Naive thymus-derived CD4-positive, alpha-beta T cell (primary cell): ENCODE measurements at regions of chr10 and their contacts with region 1.

Region 1: DNA sequence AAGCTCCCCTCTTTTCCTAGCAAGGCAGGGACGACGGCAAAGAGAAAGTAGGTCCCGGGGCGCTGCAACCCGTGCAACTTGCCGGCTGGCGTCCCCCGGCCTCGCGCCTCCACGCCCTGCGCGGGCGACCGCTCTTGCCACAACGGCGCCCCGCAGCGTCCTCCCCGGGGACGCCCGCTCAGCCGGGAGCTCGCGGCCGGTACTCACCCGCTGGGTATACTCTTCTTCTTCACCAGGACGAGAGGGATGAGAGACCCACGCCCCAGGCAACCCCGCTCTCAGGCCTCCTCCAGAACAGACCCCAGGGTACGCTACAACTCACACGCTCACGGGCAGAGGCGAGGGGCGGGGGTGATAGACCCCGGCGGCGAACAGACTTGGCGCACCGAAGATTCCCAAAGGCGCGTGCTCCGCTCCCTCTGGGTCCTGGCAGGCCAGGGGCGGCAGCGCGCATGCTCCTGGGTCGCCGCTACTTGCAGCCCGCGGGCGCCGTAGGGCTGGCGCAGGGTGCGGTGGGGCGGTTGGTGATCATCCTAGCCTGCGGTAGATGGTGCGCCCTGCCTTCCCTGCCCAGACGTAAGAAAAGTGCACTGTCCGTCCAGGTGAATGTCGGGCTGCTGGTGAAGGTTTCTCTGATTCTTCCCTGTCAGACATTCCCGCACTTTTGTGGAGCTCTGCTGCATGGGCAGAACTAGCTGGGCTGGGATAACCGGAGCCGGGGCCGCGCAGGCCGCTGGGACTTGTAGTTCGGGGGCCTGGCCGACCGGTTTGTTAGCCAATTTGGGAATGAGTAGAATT is at the start of gene CC2D2B:
- DNase-seq: peak; percentile 26 to 78 (median 53)
- ATAC-seq: peak; percentile 84
- H3K4me3 ChIP-seq: peak within 1 kb of the TSS; percentile 62
- H3K4me3 Mint-ChIP-seq: peak within 1 kb of the TSS; percentile 92 to 95 (median 94)
- H3K27ac ChIP-seq: peak within 1 kb of the TSS; percentile 65
- H3K27ac Mint-ChIP-seq: peak within 1 kb of the TSS; percentile 29 to 92 (median 89)
- H3K4me1 ChIP-seq: no peaks in the 10 kb centered on the region
- H3K4me1 Mint-ChIP-seq: peaks cover 11 to 20% (median 18%) of the 10 kb centered on the region in 7 donors
- H3K27me3 ChIP-seq: no peaks in the 10 kb centered on the region
- H3K27me3 Mint-ChIP-seq: peaks cover 0 to 20% (median 0%) of the 10 kb centered on the region in 5 donors
- total RNA-seq, gene CC2D2B: 0.64 to 0.99 TPM in 2 of 5 experiments, not detected in the others

Region 2: DNA sequence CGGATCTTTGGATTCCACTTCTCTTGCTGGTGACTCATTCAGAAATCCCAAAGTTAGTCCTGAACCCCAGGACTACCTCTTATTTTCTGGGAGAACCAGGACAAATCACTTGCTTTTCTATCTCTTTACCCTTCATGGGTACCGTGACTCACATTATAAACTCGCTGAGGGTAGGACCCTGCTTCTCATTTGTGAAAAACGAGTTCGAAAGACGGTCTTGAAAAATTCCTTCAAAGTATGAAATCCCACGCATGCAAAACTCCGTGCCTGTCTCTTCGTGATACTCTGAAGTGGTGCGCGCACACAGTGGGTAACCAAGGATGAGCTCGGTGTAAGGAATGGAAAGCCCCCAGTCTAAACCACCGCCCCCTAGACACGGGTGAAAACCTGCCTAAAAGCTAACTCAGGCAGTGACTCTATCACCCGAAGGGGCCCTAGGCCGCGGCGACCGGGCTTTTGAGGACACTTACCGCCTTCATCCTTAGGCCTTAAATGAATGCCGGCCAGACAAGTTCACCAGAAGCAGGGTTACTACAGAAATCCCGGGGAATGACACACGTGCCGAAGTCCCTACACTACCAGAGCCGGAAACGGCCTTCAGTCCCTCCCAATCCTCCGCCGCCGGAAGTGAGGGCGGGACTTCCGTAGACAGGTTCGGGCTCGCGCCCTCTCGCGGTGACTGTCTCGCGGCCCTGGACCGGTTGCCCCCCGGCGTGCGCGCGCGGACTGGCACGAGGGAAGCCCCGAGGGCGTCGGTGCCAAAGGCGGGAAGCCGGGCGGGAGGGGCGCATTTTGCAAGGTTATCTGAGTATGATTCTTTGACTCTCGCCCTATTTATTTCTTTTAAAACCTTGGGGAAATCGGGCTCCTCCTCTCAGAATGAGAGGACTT is 1545.0 kb before region 1 on chr10 and contains the start of gene NOC3L:
- CTCF ChIA-PET with region 1: no interaction called
- POLR2A ChIA-PET with region 1: no interaction called
- intact Hi-C with region 1: loop called in 1 of 2 experiments (anchors 2 kb)
- DNase-seq: peak; percentile 85 to 96 (median 91)
- ATAC-seq: peak; percentile 97
- H3K4me3 ChIP-seq: peak within 1 kb of the TSS; percentile 76
- H3K4me3 Mint-ChIP-seq: peak within 1 kb of the TSS; percentile 93 to 98 (median 96)
- H3K27ac ChIP-seq: peak within 1 kb of the TSS; percentile 92
- H3K27ac Mint-ChIP-seq: peak within 1 kb of the TSS; percentile 90 to 99 (median 97)
- H3K4me1 ChIP-seq: peaks cover 13 to 18% of the 10 kb centered on the region in 2 donors
- H3K4me1 Mint-ChIP-seq: peaks cover 20 to 54% (median 42%) of the 10 kb centered on the region in 7 donors
- H3K27me3 ChIP-seq: no peaks in the 10 kb centered on the region
- H3K27me3 Mint-ChIP-seq: peaks cover 0 to 14% (median 9%) of the 10 kb centered on the region in 5 donors
- total RNA-seq, gene NOC3L: 8.6 to 28.8 (median 24.8) TPM

Region 3: DNA sequence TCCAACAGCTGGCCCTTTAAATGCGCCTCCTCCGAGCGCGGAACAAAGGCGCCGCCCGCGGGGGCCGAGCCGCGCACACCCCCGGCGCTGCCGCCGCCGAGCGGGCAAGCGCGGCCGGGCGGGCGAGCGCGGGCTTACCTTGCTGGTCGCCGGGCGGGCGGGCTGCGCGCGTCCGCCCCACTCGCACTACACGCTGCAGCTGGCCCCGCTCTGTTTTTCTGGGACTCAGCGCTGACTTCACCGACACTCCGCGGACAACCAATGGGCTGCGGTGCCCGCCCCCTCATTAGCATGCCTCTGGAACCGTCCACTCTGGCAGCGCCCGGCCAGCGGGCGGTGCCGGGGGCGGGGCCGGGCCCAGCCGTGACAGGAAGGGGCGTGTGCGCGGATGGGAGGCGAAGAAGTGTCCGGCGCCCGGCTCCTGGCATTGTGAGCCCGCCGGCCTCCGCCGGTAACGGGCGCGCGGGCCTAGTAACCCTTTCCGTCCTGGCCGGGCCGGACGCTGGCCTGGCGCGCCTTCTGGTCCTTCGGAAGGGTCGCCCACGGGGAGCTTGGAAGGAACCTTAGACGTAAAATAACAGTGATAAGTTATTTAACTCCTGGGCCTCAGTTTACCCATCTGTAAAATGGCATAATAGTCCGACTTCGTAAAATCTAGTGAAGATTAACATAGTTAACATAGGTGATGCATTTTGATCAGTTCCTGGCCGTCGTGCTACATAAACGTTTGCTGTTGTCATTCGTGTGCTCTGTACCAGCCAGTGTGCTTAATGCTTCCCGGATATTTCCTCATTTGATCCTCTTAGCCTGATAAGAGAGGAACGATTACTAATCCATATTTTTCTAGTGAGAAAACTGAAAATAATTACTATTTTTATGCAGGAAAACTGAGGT is 346.2 kb before region 1 on chr10 and contains the start of gene SORBS1:
- CTCF ChIA-PET with region 1: no interaction called
- POLR2A ChIA-PET with region 1: no interaction called
- intact Hi-C with region 1: loop called in 1 of 2 experiments (anchors 5 kb)
- DNase-seq: peak; percentile 80 to 88 (median 82)
- ATAC-seq: peak; percentile 99
- H3K4me3 ChIP-seq: peak within 1 kb of the TSS; percentile 90
- H3K4me3 Mint-ChIP-seq: peak within 1 kb of the TSS; percentile 96 to 100 (median 99)
- H3K27ac ChIP-seq: peak within 1 kb of the TSS; percentile 66
- H3K27ac Mint-ChIP-seq: peak within 1 kb of the TSS; percentile 76 to 97 (median 89)
- H3K4me1 ChIP-seq: peaks cover 4% of the 10 kb centered on the region in 2 donors
- H3K4me1 Mint-ChIP-seq: peaks cover 7 to 16% (median 11%) of the 10 kb centered on the region in 7 donors
- H3K27me3 ChIP-seq: no peaks in the 10 kb centered on the region
- H3K27me3 Mint-ChIP-seq: peaks cover 0 to 63% (median 5%) of the 10 kb centered on the region in 5 donors
- total RNA-seq, gene SORBS1: 0.58 to 1.9 (median 1.4) TPM

Region 4: GRCh38 chr10:95656291-95657164 is 251.1 kb before region 1 on chr10 and contains the start of gene ALDH18A1:
- CTCF ChIA-PET with region 1: no interaction called
- POLR2A ChIA-PET with region 1: no interaction called
- intact Hi-C with region 1: no loop called
- DNase-seq: peak; percentile 78 to 95 (median 88)
- ATAC-seq: peak; percentile 95
- H3K4me3 ChIP-seq: peak within 1 kb of the TSS; percentile 78
- H3K4me3 Mint-ChIP-seq: peak within 1 kb of the TSS; percentile 98 to 100 (median 99)
- H3K27ac ChIP-seq: peak within 1 kb of the TSS; percentile 72
- H3K27ac Mint-ChIP-seq: peak within 1 kb of the TSS; percentile 82 to 97 (median 93)
- H3K4me1 ChIP-seq: peaks cover 7 to 13% of the 10 kb centered on the region in 2 donors
- H3K4me1 Mint-ChIP-seq: peaks cover 7 to 40% (median 27%) of the 10 kb centered on the region in 7 donors
- H3K27me3 ChIP-seq: no peaks in the 10 kb centered on the region
- H3K27me3 Mint-ChIP-seq: peaks cover 0 to 3% (median 0%) of the 10 kb centered on the region in 5 donors
- total RNA-seq, gene ALDH18A1: 15.0 to 73.8 (median 26.0) TPM

Region 5: DNA sequence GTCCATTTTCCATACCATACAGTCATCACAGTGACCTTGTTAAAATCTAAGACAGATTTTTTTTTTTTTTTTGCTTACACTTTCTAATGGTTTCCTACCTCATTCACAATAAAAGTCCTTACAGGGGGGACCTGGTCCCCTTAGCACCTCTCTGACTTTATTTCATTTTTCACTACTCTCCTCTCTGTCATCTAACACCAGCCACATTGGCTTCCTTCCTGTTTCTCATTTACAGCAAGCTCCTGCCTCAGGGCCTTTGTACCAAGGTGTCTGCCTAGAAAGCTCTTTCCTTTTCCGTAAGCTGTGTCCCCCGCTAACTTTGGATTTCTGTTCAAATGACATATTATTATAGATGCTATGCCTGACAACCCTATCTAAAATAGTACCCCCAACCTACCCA is 27.8 kb after region 1 on chr10:
- CTCF ChIA-PET with region 1: no interaction called
- POLR2A ChIA-PET with region 1: no interaction called
- intact Hi-C with region 1: no loop called
- DNase-seq: no peak
- ATAC-seq: no peak
- H3K4me3 ChIP-seq: no peak overlapping the region
- H3K4me3 Mint-ChIP-seq: peak overlapping the region in 2 of 10 donors; percentile 38
- H3K27ac ChIP-seq: no peak overlapping the region
- H3K27ac Mint-ChIP-seq: peak overlapping the region in 1 of 9 donors; percentile 53
- H3K4me1 ChIP-seq: no peaks in the 10 kb centered on the region
- H3K4me1 Mint-ChIP-seq: peaks cover 0 to 7% (median 5%) of the 10 kb centered on the region in 7 donors
- H3K27me3 ChIP-seq: no peaks in the 10 kb centered on the region
- H3K27me3 Mint-ChIP-seq: peaks cover 14 to 38% (median 24%) of the 10 kb centered on the region in 5 donors

Region 6: GRCh38 chr10:95963226-95963990 is 55.8 kb after region 1 on chr10:
- CTCF ChIA-PET with region 1: no interaction called
- POLR2A ChIA-PET with region 1: no interaction called
- intact Hi-C with region 1: loop called in 1 of 2 experiments (anchors 1 kb)
- DNase-seq: peak in 6 of 9 donors; percentile 13 to 35 (median 32)
- ATAC-seq: peak; percentile 54
- H3K4me3 ChIP-seq: peak overlapping the region; percentile 12
- H3K4me3 Mint-ChIP-seq: peak overlapping the region; percentile 17 to 71 (median 62)
- H3K27ac ChIP-seq: peak overlapping the region; percentile 26
- H3K27ac Mint-ChIP-seq: peak overlapping the region; percentile 48 to 84 (median 64)
- H3K4me1 ChIP-seq: peaks cover 5 to 14% of the 10 kb centered on the region in 2 donors
- H3K4me1 Mint-ChIP-seq: peaks cover 9 to 30% (median 27%) of the 10 kb centered on the region in 7 donors
- H3K27me3 ChIP-seq: no peaks in the 10 kb centered on the region
- H3K27me3 Mint-ChIP-seq: peaks cover 0 to 7% (median 0%) of the 10 kb centered on the region in 5 donors

Region 7: GRCh38 chr10:96025566-96025965 is 117.9 kb after region 1 on chr10:
- CTCF ChIA-PET with region 1: no interaction called
- POLR2A ChIA-PET with region 1: no interaction called
- intact Hi-C with region 1: no loop called
- DNase-seq: no peak
- ATAC-seq: peak; percentile 44
- H3K4me3 ChIP-seq: no peak overlapping the region
- H3K4me3 Mint-ChIP-seq: no peak overlapping the region
- H3K27ac ChIP-seq: no peak overlapping the region
- H3K27ac Mint-ChIP-seq: no peak overlapping the region
- H3K4me1 ChIP-seq: no peaks in the 10 kb centered on the region
- H3K4me1 Mint-ChIP-seq: no peaks in the 10 kb centered on the region
- H3K27me3 ChIP-seq: no peaks in the 10 kb centered on the region
- H3K27me3 Mint-ChIP-seq: peaks cover 2 to 14% (median 5%) of the 10 kb centered on the region in 5 donors

Region 8: DNA sequence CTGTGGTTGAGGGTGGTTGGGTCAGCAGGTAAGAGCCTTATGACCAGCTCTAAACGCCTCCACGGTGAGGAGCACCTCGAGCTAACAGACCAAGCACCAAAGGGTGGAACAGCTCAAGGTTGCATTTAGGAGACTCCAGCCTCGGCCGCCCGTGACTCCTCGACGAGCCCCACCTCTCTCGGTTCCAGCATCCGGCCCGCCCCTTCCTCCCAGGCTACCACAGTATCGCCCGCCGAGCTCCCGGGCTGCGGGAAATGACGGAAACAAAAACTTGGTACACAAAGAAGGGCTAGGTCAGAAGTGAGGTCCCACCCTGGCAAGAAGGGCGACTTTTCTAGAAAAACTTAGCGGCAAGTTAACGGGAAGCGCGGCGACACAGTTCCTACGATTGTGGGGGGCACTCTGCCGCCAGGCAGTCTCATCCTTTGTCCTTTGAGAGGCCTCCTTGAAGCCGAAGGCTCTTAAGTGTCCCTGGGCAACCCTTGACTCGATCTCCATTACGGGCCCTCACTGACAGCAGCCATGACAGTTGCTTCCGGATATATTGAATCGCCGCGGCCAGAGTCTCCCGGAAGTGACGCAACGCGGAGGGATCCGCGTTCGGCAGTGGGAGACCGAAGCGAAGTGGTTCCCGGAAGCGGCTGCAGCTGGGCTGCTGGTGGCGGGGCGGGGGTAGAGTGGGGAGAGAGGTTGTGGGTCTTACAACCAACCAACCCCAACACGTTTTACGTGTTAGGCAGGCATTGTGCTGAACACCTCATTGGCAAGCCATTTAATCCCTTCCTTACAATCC is 182.2 kb after region 1 on chr10:
- CTCF ChIA-PET with region 1: no interaction called
- POLR2A ChIA-PET with region 1: no interaction called
- intact Hi-C with region 1: loop called (anchors 1 to 2 kb)
- DNase-seq: peak; percentile 87 to 94 (median 92)
- ATAC-seq: peak; percentile 94
- H3K4me3 ChIP-seq: peak overlapping the region; percentile 99
- H3K4me3 Mint-ChIP-seq: peak overlapping the region; percentile 87 to 98 (median 94)
- H3K27ac ChIP-seq: peak overlapping the region; percentile 93
- H3K27ac Mint-ChIP-seq: peak overlapping the region; percentile 96 to 99 (median 99)
- H3K4me1 ChIP-seq: peaks cover 4 to 8% of the 10 kb centered on the region in 2 donors
- H3K4me1 Mint-ChIP-seq: peaks cover 0 to 15% (median 14%) of the 10 kb centered on the region in 7 donors
- H3K27me3 ChIP-seq: peaks cover 3 to 4% of the 10 kb centered on the region in 2 donors
- H3K27me3 Mint-ChIP-seq: peaks cover 29 to 36% (median 30%) of the 10 kb centered on the region in 5 donors